PC-3 (cell line): ENCODE measurements at regions of chr1 and their contacts with region 1.

Region 1: DNA sequence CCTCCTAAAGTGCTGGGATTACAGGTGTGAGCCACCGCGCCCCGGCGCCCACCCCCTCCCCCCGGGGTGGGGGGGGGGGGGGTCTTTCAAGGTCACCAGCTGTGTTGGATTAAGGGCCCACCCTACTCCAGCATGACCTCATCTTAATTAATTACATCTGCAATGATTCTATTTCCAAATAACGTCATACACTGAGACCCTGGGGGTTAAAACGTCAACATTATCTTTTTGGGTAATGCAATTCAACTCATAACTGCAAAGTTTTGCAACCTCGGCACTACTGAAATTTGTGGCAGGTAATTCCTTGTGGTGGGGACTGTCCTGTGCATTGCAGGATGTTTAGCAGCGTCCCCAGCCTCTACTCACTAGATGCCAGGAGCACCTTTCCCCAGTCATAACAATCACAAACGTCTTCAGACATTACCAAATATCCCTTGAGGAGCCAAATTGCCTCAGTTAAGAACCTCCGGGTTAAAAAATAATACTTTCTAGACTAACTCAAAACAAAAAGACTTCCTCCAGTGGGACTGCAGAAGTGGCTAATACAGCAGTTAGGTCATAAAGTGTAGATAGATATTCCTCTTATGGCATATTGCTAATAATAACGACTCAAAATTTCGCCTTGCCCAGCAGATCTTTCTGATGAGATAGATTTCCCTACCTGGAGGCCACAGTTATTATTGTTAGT is 233.0 kb upstream of the KAZN start:
- DNase-seq: no peak
- ATAC-seq: no peak
- H3K4me3 ChIP-seq: no peak overlapping the region
- H3K27ac ChIP-seq: no peak overlapping the region
- H3K4me1 ChIP-seq: peaks cover 24% of the 10 kb centered on the region
- H3K27me3 ChIP-seq: no peaks in the 10 kb centered on the region
- CTCF ChIP-seq: no peak

Region 2: DNA sequence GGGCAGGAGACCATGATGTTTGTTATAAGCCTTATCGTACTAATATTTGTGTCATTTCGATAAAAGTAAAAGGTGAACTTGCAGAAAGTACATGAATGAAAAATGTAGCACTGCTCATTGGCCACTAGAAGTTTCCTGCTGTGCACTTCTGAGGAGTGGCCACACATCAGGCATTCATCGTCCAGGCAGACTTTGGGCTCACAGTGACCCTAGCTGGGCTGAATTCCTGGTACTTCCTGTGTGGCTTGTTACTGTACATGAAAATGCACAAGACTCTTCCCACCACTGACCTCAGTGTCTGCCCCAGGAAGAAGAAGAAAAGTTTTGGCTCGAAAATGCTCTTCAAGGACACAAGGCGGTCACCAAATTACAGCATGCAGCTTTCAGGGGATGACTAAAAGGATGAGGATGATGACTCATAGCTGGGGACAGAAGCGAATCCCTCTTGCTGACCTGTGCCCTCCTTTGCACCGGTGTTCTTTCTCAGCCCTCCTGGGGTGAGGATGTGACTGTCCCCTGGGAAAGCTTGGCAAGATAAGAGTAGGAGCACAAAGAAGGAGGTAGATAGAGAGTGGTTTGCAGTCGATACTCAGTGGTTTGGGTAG is 19.4 kb before region 1 on chr1:
- CTCF ChIA-PET with region 1: no interaction called
- POLR2A ChIA-PET with region 1: interaction called, 15 read pairs
- intact Hi-C with region 1: no loop called
- DNase-seq: peak; percentile 77
- ATAC-seq: peak; percentile 92
- H3K4me3 ChIP-seq: no peak overlapping the region
- H3K27ac ChIP-seq: peak overlapping the region; percentile 63
- H3K4me1 ChIP-seq: peaks cover 13% of the 10 kb centered on the region
- H3K27me3 ChIP-seq: no peaks in the 10 kb centered on the region
- CTCF ChIP-seq: no peak